ENCODE measurements at regions of chr1 and their contacts with region 1.

Region 1: GRCh38 chr1:172398970-172399755 is 21.3 kb upstream of the C1orf105 start:
- DNase-seq: peak; percentile 78
- ATAC-seq: peak; percentile 82
- H3K4me3 ChIP-seq: no peak overlapping the region
- H3K27ac ChIP-seq: no peak overlapping the region
- H3K4me1 ChIP-seq: peaks cover 21% of the 10 kb centered on the region
- H3K27me3 ChIP-seq: no peaks in the 10 kb centered on the region; a peak in 1 of 5 replicates
- CTCF ChIP-seq: peak; percentile 54
- EP300 ChIP-seq: no peak
- POLR2A ChIP-seq: no peak
- RAD21 ChIP-seq: peak; percentile 46; the same call in 1 of the 2 replicates

Region 2: DNA sequence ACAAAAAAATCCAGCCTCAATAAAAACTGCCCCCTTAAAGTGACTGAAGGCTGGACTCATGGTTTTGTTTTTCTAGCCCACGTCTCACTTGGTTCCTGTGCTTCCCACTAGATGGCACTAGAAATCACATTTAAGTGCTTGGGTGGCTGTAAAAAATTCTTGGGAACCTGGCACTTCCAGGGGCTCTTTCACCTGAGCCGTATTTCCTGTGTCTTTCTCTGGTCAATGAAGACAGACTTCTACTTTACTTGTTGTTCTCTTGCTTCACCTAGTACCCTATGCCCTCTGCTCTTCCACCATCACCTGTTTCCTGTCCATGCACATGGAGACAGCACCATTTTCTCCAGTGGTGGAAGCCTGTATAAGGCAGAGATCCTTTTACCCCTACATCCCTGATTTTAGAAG is 597.7 kb before region 1 on chr1:
- CTCF ChIA-PET with region 1: no interaction called
- POLR2A ChIA-PET with region 1: no interaction called
- in situ Hi-C with region 1: no loop called
- intact Hi-C with region 1: loop called (anchors 2 kb)
- DNase-seq: peak; percentile 37
- ATAC-seq: peak; percentile 72
- H3K4me3 ChIP-seq: no peak overlapping the region
- H3K27ac ChIP-seq: no peak overlapping the region
- H3K4me1 ChIP-seq: no peaks in the 10 kb centered on the region
- H3K27me3 ChIP-seq: no peaks in the 10 kb centered on the region
- CTCF ChIP-seq: peak; percentile 71
- EP300 ChIP-seq: no peak
- POLR2A ChIP-seq: no peak
- RAD21 ChIP-seq: peak; percentile 31; the same call in 1 of the 2 replicates

Region 3: GRCh38 chr1:172002725-172003345 is 396.3 kb before region 1 on chr1:
- CTCF ChIA-PET with region 1: interaction called, 14 read pairs
- POLR2A ChIA-PET with region 1: no interaction called
- in situ Hi-C with region 1: loop called (anchors 10 kb)
- intact Hi-C with region 1: loop called (anchors 1 kb)
- DNase-seq: peak; percentile 37
- ATAC-seq: no peak
- H3K4me3 ChIP-seq: no peak overlapping the region
- H3K27ac ChIP-seq: no peak overlapping the region
- H3K4me1 ChIP-seq: peaks cover 12% of the 10 kb centered on the region
- H3K27me3 ChIP-seq: no peaks in the 10 kb centered on the region
- CTCF ChIP-seq: peak; percentile 64
- EP300 ChIP-seq: no peak
- POLR2A ChIP-seq: no peak
- RAD21 ChIP-seq: no peak

Region 4: GRCh38 chr1:172089768-172090510 is 309.2 kb before region 1 on chr1:
- CTCF ChIA-PET with region 1: interaction called, 7 read pairs
- POLR2A ChIA-PET with region 1: no interaction called
- in situ Hi-C with region 1: no loop called
- intact Hi-C with region 1: loop called (anchors 1 kb)
- DNase-seq: peak; percentile 1
- ATAC-seq: peak; percentile 77
- H3K4me3 ChIP-seq: no peak overlapping the region
- H3K27ac ChIP-seq: no peak overlapping the region
- H3K4me1 ChIP-seq: no peaks in the 10 kb centered on the region
- H3K27me3 ChIP-seq: no peaks in the 10 kb centered on the region
- CTCF ChIP-seq: peak; percentile 70
- EP300 ChIP-seq: no peak
- POLR2A ChIP-seq: no peak
- RAD21 ChIP-seq: 0 out of 2 replicates have a peak, but pooled peaks have one; percentile 36

Region 5: GRCh38 chr1:172135076-172135672 is 264.0 kb before region 1 on chr1:
- CTCF ChIA-PET with region 1: interaction called, 7 read pairs
- POLR2A ChIA-PET with region 1: no interaction called
- in situ Hi-C with region 1: no loop called
- intact Hi-C with region 1: loop called (anchors 1 kb)
- DNase-seq: peak; percentile 32
- ATAC-seq: 0 out of 3 replicates have a peak, but pooled peaks have one; percentile 47
- H3K4me3 ChIP-seq: no peak overlapping the region
- H3K27ac ChIP-seq: no peak overlapping the region
- H3K4me1 ChIP-seq: no peaks in the 10 kb centered on the region
- H3K27me3 ChIP-seq: no peaks in the 10 kb centered on the region
- CTCF ChIP-seq: peak; percentile 49
- EP300 ChIP-seq: no peak
- POLR2A ChIP-seq: no peak
- RAD21 ChIP-seq: no peak

Region 6: DNA sequence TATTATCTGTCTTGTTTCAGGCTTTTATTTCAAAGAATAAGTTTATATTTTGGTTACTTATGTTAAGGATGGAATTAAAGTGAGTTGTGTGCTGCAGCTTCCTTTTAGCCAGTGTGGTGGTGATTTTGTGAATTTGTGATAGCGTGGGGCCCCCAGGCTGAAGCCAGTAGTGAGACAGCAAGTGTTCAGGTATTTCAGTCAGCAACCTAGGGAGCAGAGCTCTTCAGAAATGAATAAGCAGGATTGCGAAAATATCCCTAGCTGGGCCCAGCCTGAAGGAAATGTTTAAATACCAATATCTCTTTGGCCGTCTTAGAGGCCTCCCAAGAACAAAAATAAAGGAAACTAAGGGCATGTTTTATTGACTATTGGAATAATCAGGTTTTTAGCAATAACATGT is 129.5 kb before region 1 on chr1:
- CTCF ChIA-PET with region 1: no interaction called
- POLR2A ChIA-PET with region 1: no interaction called
- in situ Hi-C with region 1: no loop called
- intact Hi-C with region 1: loop called (anchors 5 kb)
- DNase-seq: peak; percentile 33
- ATAC-seq: peak; percentile 87
- H3K4me3 ChIP-seq: peak overlapping the region in 2 of 3 experiments; percentile 27 to 37; a peak in 3 of 6 replicates
- H3K27ac ChIP-seq: peak overlapping the region; percentile 16
- H3K4me1 ChIP-seq: peaks cover 42% of the 10 kb centered on the region
- H3K27me3 ChIP-seq: peaks cover 0 to 7% of the 10 kb centered on the region in 2 experiments; a peak in 3 of 5 replicates
- CTCF ChIP-seq: peak; percentile 19; the same call in 1 of the 2 replicates
- EP300 ChIP-seq: no peak
- POLR2A ChIP-seq: no peak
- RAD21 ChIP-seq: no peak

Region 7: DNA sequence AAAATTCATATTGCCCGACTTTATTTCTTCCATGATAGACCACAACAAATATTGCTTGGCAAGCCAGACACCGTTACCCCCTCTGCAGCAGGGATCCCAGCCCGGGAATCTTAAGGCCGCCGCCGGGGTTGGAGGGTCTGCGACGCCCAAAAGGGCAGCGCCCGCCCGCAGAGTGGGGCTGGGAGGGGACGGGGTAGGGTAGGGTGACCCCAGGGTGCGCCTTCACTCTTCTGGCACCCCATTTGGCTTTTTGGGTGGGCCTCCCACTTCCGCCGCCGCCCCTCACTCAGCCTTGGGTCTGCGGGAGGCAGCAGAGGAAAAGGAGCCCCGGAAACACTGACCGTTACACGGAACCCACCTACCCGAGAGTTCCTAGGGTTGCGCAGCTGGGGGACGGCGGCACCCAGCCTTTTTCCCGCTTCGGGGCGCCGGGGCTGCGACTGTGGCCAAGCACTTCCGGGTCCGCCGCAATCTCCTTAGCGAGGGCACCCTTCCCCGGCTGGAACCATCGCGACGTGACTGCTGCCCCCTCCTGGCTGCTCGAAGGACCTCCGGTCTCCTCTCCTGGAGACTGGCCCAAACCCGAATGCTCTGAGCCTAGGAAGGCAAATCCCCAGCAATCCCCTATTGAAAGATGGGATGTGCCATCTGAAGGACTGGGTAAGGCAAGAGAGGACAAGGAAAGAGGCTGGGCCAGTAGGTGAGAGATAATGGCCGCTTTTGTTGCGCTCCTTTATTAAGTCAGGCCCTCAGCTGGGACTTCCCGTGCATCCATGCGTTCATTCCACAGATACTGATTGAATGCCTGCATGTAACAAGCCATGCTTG is 44.7 kb after region 1 on chr1 and contains the start of gene PIGC:
- CTCF ChIA-PET with region 1: no interaction called
- POLR2A ChIA-PET with region 1: no interaction called
- in situ Hi-C with region 1: no loop called
- intact Hi-C with region 1: no loop called
- DNase-seq: peak; percentile 73
- ATAC-seq: peak; percentile 98
- H3K4me3 ChIP-seq: peak within 1 kb of the TSS; percentile 82 to 93 (median 87)
- H3K27ac ChIP-seq: peak within 1 kb of the TSS; percentile 66
- H3K4me1 ChIP-seq: peaks cover 44% of the 10 kb centered on the region
- H3K27me3 ChIP-seq: no peaks in the 10 kb centered on the region
- CTCF ChIP-seq: peak; percentile 97
- EP300 ChIP-seq: no peak; a peak in 1 of 4 replicates
- POLR2A ChIP-seq: peak; percentile 65 to 68
- RAD21 ChIP-seq: peak; percentile 71
- total RNA-seq, gene PIGC: 24.1 and 29.5 TPM in 2 replicates

Region 8: GRCh38 chr1:172537827-172538391 is 138.7 kb after region 1 on chr1:
- CTCF ChIA-PET with region 1: no interaction called
- POLR2A ChIA-PET with region 1: no interaction called
- in situ Hi-C with region 1: no loop called
- intact Hi-C with region 1: no loop called
- DNase-seq: no peak
- ATAC-seq: no peak
- H3K4me3 ChIP-seq: no peak overlapping the region
- H3K27ac ChIP-seq: no peak overlapping the region
- H3K4me1 ChIP-seq: peaks cover 49% of the 10 kb centered on the region
- H3K27me3 ChIP-seq: no peaks in the 10 kb centered on the region; a peak in 1 of 5 replicates
- CTCF ChIP-seq: no peak
- EP300 ChIP-seq: no peak
- POLR2A ChIP-seq: no peak
- RAD21 ChIP-seq: no peak

Measured in HepG2 (cell line).